Esophagus squamous epithelium (tissue), 5 donors: ENCODE measurements at regions of chr7 and their contacts with region 1.

Region 1: GRCh38 chr7:155344600-155345433 is 47.1 kb downstream of the INSIG1 start:
- DNase-seq: no peak
- H3K4me3 ChIP-seq: peak overlapping the region; percentile 13 to 59 (median 29)
- H3K27ac ChIP-seq: no peak overlapping the region
- H3K4me1 ChIP-seq: peaks cover 0 to 15% (median 3%) of the 10 kb centered on the region in 3 donors
- H3K27me3 ChIP-seq: peaks cover 0 to 63% (median 4%) of the 10 kb centered on the region in 4 donors
- CTCF ChIP-seq: peak; percentile 88 to 98 (median 94)
- POLR2A ChIP-seq: no peak

Region 2: DNA sequence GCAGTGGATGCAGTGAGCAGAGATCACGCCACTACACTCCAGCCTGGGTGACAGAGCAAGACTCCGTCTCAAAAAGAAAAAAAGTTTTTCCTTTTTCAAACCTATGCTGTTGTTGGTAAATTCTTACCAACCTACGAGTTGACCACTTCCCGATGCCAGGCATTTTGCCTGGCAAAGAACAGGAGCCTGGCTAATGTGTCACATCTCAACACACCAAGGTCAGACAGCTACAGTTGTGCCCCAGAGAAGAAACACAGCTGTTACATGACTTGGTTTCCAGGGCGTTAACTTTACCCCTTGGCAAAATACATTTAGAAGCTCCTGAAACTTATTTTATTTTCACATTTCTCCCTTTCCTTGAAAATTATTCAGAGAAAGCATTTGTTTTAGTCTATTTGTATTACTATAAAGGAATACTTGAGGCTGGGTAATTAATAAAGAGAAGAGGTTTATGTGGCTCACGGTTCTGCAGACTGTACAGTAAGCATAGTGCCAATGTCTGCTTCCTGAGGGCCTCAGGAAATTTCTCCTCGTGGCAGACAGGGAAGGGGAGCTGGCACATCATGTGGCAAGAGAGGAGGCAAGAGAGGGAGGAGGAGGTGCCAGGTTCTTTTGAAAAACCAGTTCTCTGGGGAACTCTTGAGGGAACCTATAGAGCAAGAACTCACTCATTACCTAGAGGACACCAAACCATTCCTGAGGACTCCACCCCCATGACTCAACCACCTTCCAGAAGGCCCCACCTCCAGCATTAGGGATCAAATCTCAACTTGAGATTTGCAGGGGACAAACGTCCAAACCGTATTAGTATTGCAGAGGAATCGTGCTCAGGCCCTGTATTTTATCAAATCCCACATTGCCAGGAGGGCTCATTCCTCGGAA is 425.2 kb before region 1 on chr7:
- intact Hi-C with region 1: loop called (anchors 5 kb)
- DNase-seq: no peak
- H3K4me3 ChIP-seq: no peak overlapping the region
- H3K27ac ChIP-seq: no peak overlapping the region
- H3K4me1 ChIP-seq: peaks cover 0 to 4% (median 0%) of the 10 kb centered on the region in 3 donors
- H3K27me3 ChIP-seq: peaks cover 0 to 26% (median under 1%) of the 10 kb centered on the region in 4 donors
- CTCF ChIP-seq: no peak
- POLR2A ChIP-seq: no peak

Region 3: GRCh38 chr7:155190688-155191087 is 154.1 kb before region 1 on chr7:
- intact Hi-C with region 1: loop called (anchors 2 kb)
- DNase-seq: no peak
- H3K4me3 ChIP-seq: peak overlapping the region in 1 of 4 donors; percentile 35
- H3K27ac ChIP-seq: no peak overlapping the region
- H3K4me1 ChIP-seq: peaks cover 0 to 7% (median 0%) of the 10 kb centered on the region in 3 donors
- H3K27me3 ChIP-seq: peaks cover 0 to 70% (median 0%) of the 10 kb centered on the region in 4 donors
- CTCF ChIP-seq: peak; percentile 84 to 97 (median 90)
- POLR2A ChIP-seq: no peak